ENCODE measurements at regions of chr2 and their contacts with region 1.

Region 1: GRCh38 chr2:122081751-122082150 is 326.3 kb downstream of the TSN start:
- DNase-seq: no peak
- ATAC-seq: no peak
- H3K4me3 ChIP-seq: no peak overlapping the region
- H3K27ac ChIP-seq: no peak overlapping the region
- H3K4me1 ChIP-seq: no peaks in the 10 kb centered on the region
- H3K27me3 ChIP-seq: no peaks in the 10 kb centered on the region
- CTCF ChIP-seq: no peak

Region 2: GRCh38 chr2:121992700-121993099 is 89.1 kb before region 1 on chr2:
- intact Hi-C with region 1: no loop called
- DNase-seq: no peak
- ATAC-seq: peak in 1 of 8 donors; percentile 8
- H3K4me3 ChIP-seq: no peak overlapping the region
- H3K27ac ChIP-seq: no peak overlapping the region
- H3K4me1 ChIP-seq: no peaks in the 10 kb centered on the region
- H3K27me3 ChIP-seq: peaks cover 0 to 17% (median 5%) of the 10 kb centered on the region in 7 donors
- CTCF ChIP-seq: no peak

Region 3: DNA sequence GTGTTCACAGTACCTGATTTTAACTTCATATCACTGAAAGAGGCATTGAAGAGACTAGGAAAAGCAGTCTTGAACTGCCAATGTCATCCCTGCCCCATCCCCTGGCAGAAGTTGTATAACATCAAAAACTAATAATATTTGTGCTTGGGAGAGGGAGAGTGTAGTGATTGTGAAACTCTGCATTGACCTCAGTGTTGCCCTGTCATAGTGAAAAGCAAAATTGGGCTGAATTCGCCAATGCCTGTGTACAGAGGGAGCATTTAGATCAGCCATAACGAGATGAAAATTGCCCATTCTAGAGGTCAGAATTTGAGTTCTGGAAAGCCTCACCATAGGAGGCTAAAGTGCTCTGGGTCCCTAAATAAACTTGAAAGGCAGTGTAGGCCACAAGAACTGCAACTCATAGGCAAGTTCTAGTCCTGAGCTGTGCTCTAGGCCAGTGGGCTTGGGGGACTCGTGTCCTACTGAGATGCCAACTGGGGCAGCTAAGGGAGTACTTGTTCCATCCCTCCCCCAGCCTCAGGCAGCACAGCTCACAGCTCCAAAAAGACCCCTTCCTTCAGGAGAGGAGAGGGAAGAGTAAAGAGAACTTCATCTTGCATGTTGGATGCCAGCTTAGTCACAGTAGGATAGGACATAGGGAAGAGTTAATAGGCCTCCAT is 529.3 kb after region 1 on chr2:
- intact Hi-C with region 1: loop called in 1 of 10 experiments (anchors 5 kb)
- DNase-seq: no peak
- ATAC-seq: no peak
- H3K4me3 ChIP-seq: no peak overlapping the region
- H3K27ac ChIP-seq: no peak overlapping the region
- H3K4me1 ChIP-seq: no peaks in the 10 kb centered on the region
- H3K27me3 ChIP-seq: no peaks in the 10 kb centered on the region
- CTCF ChIP-seq: no peak

Measured in heart right ventricle (tissue), 16 donors.